ENCODE measurements at regions of chr3 and their contacts with region 1.

Region 1: GRCh38 chr3:98994128-98994762 is 92.8 kb upstream of the DCBLD2 start:
- DNase-seq: no peak
- H3K4me3 ChIP-seq: no peak overlapping the region
- H3K27ac ChIP-seq: no peak overlapping the region
- H3K4me1 ChIP-seq: peaks cover 19% of the 10 kb centered on the region
- CTCF ChIP-seq: peak; percentile 69

Region 2: GRCh38 chr3:99012051-99012450 is 17.8 kb after region 1 on chr3:
- CTCF ChIA-PET with region 1: interaction called, 3 read pairs
- POLR2A ChIA-PET with region 1: interaction called, 16 read pairs
- intact Hi-C with region 1: no loop called
- DNase-seq: peak; percentile 96
- H3K4me3 ChIP-seq: peak overlapping the region; percentile 54
- H3K27ac ChIP-seq: peak overlapping the region; percentile 96
- H3K4me1 ChIP-seq: peaks cover 71% of the 10 kb centered on the region
- CTCF ChIP-seq: no peak; the same call in 1 of the 2 replicates

Region 3: DNA sequence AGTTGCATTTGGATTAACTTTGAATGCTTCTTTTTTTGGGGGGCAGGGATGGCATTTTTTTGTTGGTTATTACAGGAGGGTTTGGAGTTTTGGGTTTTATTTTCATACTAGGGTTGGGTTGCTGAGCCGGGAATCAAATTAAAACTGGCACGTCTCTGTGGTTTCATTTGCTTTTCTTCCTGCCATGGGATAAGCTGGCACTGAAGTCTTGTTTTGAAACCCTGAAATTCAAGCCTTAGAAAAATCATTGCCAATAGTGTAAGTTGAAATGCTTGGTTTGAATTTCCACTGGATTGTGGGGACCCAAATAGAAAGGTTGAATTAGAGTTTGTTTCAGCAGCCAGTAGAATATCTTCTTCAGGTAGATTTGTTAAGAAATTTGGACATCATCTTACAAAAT is 100.4 kb after region 1 on chr3:
- CTCF ChIA-PET with region 1: no interaction called
- POLR2A ChIA-PET with region 1: interaction called, 3 read pairs
- intact Hi-C with region 1: loop called (anchors 1 kb)
- DNase-seq: no peak
- H3K4me3 ChIP-seq: no peak overlapping the region
- H3K27ac ChIP-seq: no peak overlapping the region
- H3K4me1 ChIP-seq: no peaks in the 10 kb centered on the region
- CTCF ChIP-seq: no peak

Region 4: DNA sequence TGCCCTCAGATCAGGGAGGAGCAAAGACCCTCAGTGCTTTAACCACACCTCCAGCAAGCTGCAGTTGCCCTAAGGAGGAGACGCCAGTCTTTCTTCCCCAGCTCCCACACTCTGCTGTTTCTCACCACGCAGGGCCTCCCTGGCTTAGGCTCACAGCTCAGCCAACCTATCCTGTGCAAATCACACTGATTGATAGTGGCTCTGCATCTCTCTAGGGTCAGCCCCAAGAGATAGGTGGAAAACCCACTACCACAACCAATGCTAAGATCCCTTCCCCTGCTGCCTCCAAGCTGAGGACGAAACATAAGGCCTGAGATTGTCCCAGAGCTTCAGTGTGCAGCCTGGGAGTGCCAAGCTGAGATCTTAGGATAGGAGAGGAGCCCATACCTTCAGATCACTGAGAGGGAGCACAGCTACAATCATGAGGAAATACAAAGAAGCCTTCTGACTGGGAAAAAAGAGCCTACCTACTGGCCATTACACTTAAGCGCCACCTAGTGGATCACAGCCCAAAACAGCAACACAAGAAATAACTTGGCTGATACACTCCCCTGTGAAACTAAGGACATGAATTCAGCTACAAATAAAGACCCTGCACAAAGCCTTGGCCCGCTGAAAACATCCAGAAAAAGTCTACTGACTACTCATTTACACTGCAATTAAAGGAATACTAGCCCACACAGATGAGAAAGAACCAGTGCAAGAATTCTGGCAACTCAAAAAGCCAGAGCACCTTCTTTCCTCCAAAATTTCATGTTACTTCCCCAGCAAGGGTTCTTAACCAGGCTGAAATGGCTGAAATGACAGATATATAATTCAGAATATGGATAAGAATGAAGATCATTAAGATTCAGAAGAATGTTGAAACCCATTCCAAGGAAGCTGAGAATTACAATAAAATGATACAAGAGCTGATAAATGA is 178.8 kb after region 1 on chr3:
- CTCF ChIA-PET with region 1: interaction called, 9 read pairs
- POLR2A ChIA-PET with region 1: interaction called, 3 read pairs
- intact Hi-C with region 1: loop called (anchors 1 kb)
- DNase-seq: peak; percentile 80
- H3K4me3 ChIP-seq: no peak overlapping the region
- H3K27ac ChIP-seq: no peak overlapping the region
- H3K4me1 ChIP-seq: no peaks in the 10 kb centered on the region
- CTCF ChIP-seq: peak; percentile 92

Measured in OCI-LY7 (cell line).